Sigmoid colon (tissue), 7 donors: ENCODE measurements at regions of chr2 and their contacts with region 1.

Region 1: GRCh38 chr2:20635675-20636584 is 15.0 kb downstream of the HS1BP3 start:
- DNase-seq: peak; percentile 95
- H3K4me3 ChIP-seq: peak overlapping the region in 2 of 4 donors; percentile 4 to 18
- H3K27ac ChIP-seq: peak overlapping the region; percentile 92 to 97 (median 94)
- H3K4me1 ChIP-seq: peaks cover 0 to 83% (median 73%) of the 10 kb centered on the region in 4 donors
- H3K27me3 ChIP-seq: no peaks in the 10 kb centered on the region
- CTCF ChIP-seq: peak; percentile 92 to 98 (median 96)
- EP300 ChIP-seq: no peak
- POLR2A ChIP-seq: no peak

Region 2: GRCh38 chr2:20444161-20444992 is 191.6 kb before region 1 on chr2:
- intact Hi-C with region 1: loop called (anchors 1 kb)
- DNase-seq: peak; percentile 75
- H3K4me3 ChIP-seq: peak overlapping the region; percentile 21 to 100 (median 78)
- H3K27ac ChIP-seq: peak overlapping the region; percentile 93 to 98 (median 98)
- H3K4me1 ChIP-seq: peaks cover 0 to 25% (median 23%) of the 10 kb centered on the region in 4 donors
- H3K27me3 ChIP-seq: no peaks in the 10 kb centered on the region
- CTCF ChIP-seq: no peak
- EP300 ChIP-seq: no peak
- POLR2A ChIP-seq: peak; percentile 20 to 32

Region 3: GRCh38 chr2:20490260-20491181 is 145.4 kb before region 1 on chr2:
- intact Hi-C with region 1: loop called (anchors 5 kb)
- DNase-seq: peak; percentile 94
- H3K4me3 ChIP-seq: no peak overlapping the region
- H3K27ac ChIP-seq: peak overlapping the region in 3 of 4 donors; percentile 72 to 84 (median 83)
- H3K4me1 ChIP-seq: peaks cover 4 to 56% (median 44%) of the 10 kb centered on the region in 4 donors
- H3K27me3 ChIP-seq: no peaks in the 10 kb centered on the region
- CTCF ChIP-seq: no peak
- EP300 ChIP-seq: peak; percentile 83 to 95 (median 90)
- POLR2A ChIP-seq: no peak

Region 4: DNA sequence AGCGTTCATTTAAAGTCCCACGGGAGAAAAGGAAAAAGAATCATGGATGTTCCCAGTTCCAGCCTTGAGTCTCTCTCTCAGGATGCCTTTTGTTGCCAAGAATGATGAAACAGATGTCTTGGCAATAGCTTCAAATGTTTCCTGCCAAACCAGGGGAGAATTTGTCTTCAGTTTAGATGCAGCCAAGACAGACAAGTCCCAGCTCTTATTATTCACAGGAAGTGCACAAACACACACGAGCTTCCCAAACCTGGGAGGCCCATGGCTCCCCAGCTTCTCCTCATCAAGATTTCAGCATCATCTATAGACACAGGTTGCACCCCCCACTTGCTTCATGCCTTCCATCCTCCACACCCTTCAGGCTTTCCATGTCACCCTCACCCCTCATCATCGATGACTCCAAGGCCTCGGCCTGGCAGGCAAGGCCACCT is 31.0 kb before region 1 on chr2:
- intact Hi-C with region 1: loop called (anchors 2 kb)
- DNase-seq: peak; percentile 88
- H3K4me3 ChIP-seq: no peak overlapping the region
- H3K27ac ChIP-seq: peak overlapping the region; percentile 80 to 89 (median 84)
- H3K4me1 ChIP-seq: peaks cover 0 to 52% (median 45%) of the 10 kb centered on the region in 4 donors
- H3K27me3 ChIP-seq: no peaks in the 10 kb centered on the region
- CTCF ChIP-seq: no peak
- EP300 ChIP-seq: peak in 3 of 4 donors; percentile 27 to 69 (median 34)
- POLR2A ChIP-seq: no peak

Region 5: DNA sequence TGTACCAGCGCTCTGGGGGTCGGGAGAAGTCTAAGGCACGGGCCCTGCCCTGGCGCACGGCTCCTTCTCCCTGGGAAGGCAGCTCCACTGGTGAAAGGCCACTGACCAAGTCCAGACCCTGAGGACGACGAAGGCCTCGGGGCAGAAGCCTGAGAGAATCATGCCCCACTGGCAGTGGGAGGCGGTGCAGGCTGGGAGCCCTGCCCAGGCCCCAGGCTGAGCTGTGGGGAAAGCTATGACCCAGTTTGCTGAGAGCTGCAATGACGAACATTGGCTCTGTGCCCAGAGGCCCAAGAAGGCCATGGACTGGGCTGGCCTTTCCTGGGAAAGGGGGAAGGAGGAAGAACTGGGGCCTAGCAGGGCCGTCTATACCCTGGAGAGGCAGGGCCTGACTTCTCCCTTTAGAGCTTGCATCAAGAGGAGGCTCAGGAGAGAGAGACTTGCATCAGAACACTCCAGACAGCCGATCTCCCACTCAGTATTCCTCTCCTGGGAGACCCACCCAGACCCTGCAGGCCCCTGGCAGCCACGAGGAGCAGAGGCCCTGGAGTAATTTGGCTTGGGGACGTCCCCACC is 17.9 kb before region 1 on chr2:
- intact Hi-C with region 1: loop called (anchors 1 kb)
- DNase-seq: peak; percentile 100
- H3K4me3 ChIP-seq: no peak overlapping the region
- H3K27ac ChIP-seq: peak overlapping the region; percentile 96 to 98 (median 98)
- H3K4me1 ChIP-seq: peaks cover 0 to 94% (median 86%) of the 10 kb centered on the region in 4 donors
- H3K27me3 ChIP-seq: no peaks in the 10 kb centered on the region
- CTCF ChIP-seq: peak; percentile 69 to 82 (median 71)
- EP300 ChIP-seq: peak; percentile 94 to 99 (median 96)
- POLR2A ChIP-seq: peak; percentile 7 to 61